ENCODE measurements at regions of chr15 and their contacts with region 1.

Region 1: GRCh38 chr15:33021806-33022389 is 172.6 kb downstream of the FMN1 start:
- DNase-seq: peak in 2 of 14 experiments; percentile 17 to 26
- ATAC-seq: no peak
- H3K4me3 ChIP-seq: no peak overlapping the region
- H3K4me3 Mint-ChIP-seq: no peak overlapping the region
- H3K27ac ChIP-seq: no peak overlapping the region
- H3K27ac Mint-ChIP-seq: no peak overlapping the region
- H3K4me1 ChIP-seq: no peaks in the 10 kb centered on the region
- H3K4me1 Mint-ChIP-seq: no peaks in the 10 kb centered on the region
- H3K27me3 ChIP-seq: no peaks in the 10 kb centered on the region
- H3K27me3 Mint-ChIP-seq: no peaks in the 10 kb centered on the region
- CTCF ChIP-seq: peak; percentile 57

Region 2: GRCh38 chr15:33047077-33047476 is 25.2 kb after region 1 on chr15:
- CTCF ChIA-PET with region 1: no interaction called
- POLR2A ChIA-PET with region 1: no interaction called
- intact Hi-C with region 1: loop called in 1 of 2 experiments (anchors 2 kb)
- DNase-seq: no peak
- ATAC-seq: peak; percentile 86
- H3K4me3 ChIP-seq: no peak overlapping the region
- H3K4me3 Mint-ChIP-seq: no peak overlapping the region
- H3K27ac ChIP-seq: no peak overlapping the region
- H3K27ac Mint-ChIP-seq: peak overlapping the region; percentile 88
- H3K4me1 ChIP-seq: no peaks in the 10 kb centered on the region
- H3K4me1 Mint-ChIP-seq: peaks cover 10% of the 10 kb centered on the region
- H3K27me3 ChIP-seq: no peaks in the 10 kb centered on the region
- H3K27me3 Mint-ChIP-seq: no peaks in the 10 kb centered on the region
- CTCF ChIP-seq: no peak

Region 3: GRCh38 chr15:33132722-33133345 is 110.9 kb after region 1 on chr15:
- CTCF ChIA-PET with region 1: no interaction called
- POLR2A ChIA-PET with region 1: no interaction called
- intact Hi-C with region 1: loop called in 1 of 2 experiments (anchors 5 kb)
- DNase-seq: peak in 3 of 14 experiments; percentile 46 to 57 (median 55)
- ATAC-seq: no peak
- H3K4me3 ChIP-seq: no peak overlapping the region
- H3K4me3 Mint-ChIP-seq: no peak overlapping the region
- H3K27ac ChIP-seq: no peak overlapping the region
- H3K27ac Mint-ChIP-seq: no peak overlapping the region
- H3K4me1 ChIP-seq: no peaks in the 10 kb centered on the region
- H3K4me1 Mint-ChIP-seq: peaks cover 2% of the 10 kb centered on the region
- H3K27me3 ChIP-seq: no peaks in the 10 kb centered on the region
- H3K27me3 Mint-ChIP-seq: no peaks in the 10 kb centered on the region
- CTCF ChIP-seq: peak; percentile 70

Region 4: DNA sequence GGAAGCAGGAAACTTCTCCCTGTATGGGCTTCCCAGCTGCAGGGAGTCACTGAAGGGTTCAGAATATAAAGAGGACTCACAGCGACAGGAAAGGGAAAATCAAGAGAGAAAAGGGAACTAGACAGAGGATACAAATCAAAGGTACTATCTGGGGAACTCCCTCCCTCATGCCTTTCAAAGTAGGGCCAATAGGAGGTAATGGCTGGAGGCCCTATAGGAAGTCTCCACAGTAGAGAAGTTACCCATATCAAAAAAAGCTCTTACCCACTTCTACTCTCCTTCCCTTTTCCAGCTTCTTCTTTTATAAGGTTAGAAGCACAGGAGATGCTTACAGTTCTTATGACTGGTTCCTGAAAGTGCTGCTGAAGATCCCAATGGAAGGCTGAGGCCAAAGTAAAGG is 129.1 kb after region 1 on chr15:
- CTCF ChIA-PET with region 1: no interaction called
- POLR2A ChIA-PET with region 1: no interaction called
- intact Hi-C with region 1: no loop called
- DNase-seq: peak in 2 of 14 experiments; percentile 42 to 43
- ATAC-seq: no peak
- H3K4me3 ChIP-seq: no peak overlapping the region
- H3K4me3 Mint-ChIP-seq: no peak overlapping the region
- H3K27ac ChIP-seq: no peak overlapping the region
- H3K27ac Mint-ChIP-seq: no peak overlapping the region
- H3K4me1 ChIP-seq: peaks cover 6% of the 10 kb centered on the region
- H3K4me1 Mint-ChIP-seq: peaks cover 16% of the 10 kb centered on the region
- H3K27me3 ChIP-seq: no peaks in the 10 kb centered on the region
- H3K27me3 Mint-ChIP-seq: no peaks in the 10 kb centered on the region
- CTCF ChIP-seq: no peak

Measured in CD4-positive, alpha-beta T cell (primary cell).